H1 (cell line): ENCODE measurements at regions of chr19 and their contacts with region 1.

Region 1: GRCh38 chr19:3783660-3784584 is 2.3 kb downstream of the MATK start:
- DNase-seq: peak in 1 of 2 experiments; percentile 79
- H3K4me3 ChIP-seq: no peak overlapping the region
- H3K27ac ChIP-seq: no peak overlapping the region
- H3K4me1 ChIP-seq: peaks cover 0 to 9% (median 1%) of the 10 kb centered on the region in 4 experiments; a peak in 3 of 7 replicates
- H3K27me3 ChIP-seq: peaks cover 0 to 17% (median 7%) of the 10 kb centered on the region in 4 experiments; a peak in 6 of 7 replicates
- CTCF ChIP-seq: peak; percentile 68 to 87 (median 85)
- EP300 ChIP-seq: no peak
- POLR2A ChIP-seq: no peak
- RAD21 ChIP-seq: peak; percentile 68 to 81

Region 2: GRCh38 chr19:3700221-3701032 is 83.5 kb before region 1 on chr19 and contains the start of gene PIP5K1C:
- CTCF ChIA-PET with region 1: no interaction called
- POLR2A ChIA-PET with region 1: no interaction called
- DNase-seq: peak in 1 of 2 experiments; percentile 99
- H3K4me3 ChIP-seq: peak within 1 kb of the TSS; percentile 59 to 85 (median 72)
- H3K27ac ChIP-seq: no peak within 1 kb of the TSS
- H3K4me1 ChIP-seq: peaks cover 0 to 8% (median 2%) of the 10 kb centered on the region in 4 experiments; a peak in 3 of 7 replicates
- H3K27me3 ChIP-seq: no peaks in the 10 kb centered on the region; a peak in 2 of 7 replicates
- CTCF ChIP-seq: peak; percentile 75 to 84 (median 78)
- EP300 ChIP-seq: no peak
- POLR2A ChIP-seq: no peak
- RAD21 ChIP-seq: peak; percentile 64 to 72
- total RNA-seq, gene PIP5K1C: 31.3 and 32.9 TPM in 2 replicates

Region 3: DNA sequence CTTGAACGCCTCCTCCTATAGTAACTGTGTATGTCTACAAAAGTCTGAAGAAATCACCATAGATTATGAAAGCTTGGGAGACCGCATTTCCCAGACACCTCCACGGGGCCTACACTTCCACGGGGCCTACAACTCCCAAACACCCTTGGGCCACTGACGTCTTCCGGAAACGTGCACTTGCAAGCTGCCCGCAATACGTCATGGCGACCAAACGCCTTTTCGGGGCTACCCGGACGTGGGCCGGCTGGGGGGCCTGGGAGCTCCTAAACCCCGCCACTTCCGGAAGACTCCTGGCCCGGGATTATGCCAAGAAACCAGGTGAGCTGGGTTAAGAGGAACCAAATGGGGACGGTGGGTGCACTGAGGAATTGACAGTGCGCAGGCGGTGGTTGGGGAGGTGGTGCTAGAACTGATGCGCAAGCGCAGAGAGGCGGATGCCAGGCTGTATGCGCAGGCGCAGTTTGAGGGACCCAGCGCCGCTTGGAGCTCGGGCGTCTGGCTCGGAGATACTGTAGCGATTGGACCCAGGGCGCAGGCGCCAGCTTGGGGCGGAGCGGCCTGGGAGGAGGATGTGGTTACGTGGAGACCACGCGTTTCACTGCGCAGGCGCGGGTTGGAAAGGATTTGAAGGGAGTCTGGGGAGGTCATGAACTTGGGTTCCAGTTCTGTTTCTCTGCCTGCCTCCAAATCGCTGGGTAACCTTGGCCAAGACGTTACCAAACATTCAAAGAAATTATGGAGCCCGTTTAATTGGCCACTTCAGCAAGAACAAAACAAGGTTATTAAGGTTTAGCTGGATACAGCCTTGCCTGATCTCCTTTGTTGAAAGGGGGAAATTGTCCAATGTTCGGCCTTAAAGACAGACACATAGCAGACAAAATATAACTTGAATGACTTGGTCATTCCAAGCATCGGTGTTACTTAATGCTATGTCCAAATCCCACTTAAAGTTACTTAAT is 21.1 kb before region 1 on chr19 and contains the start of gene MRPL54:
- CTCF ChIA-PET with region 1: interaction called, 6 read pairs
- POLR2A ChIA-PET with region 1: interaction called, 19 read pairs
- DNase-seq: peak; percentile 96 to 99
- H3K4me3 ChIP-seq: peak within 1 kb of the TSS; percentile 88 to 95 (median 90)
- H3K27ac ChIP-seq: peak within 1 kb of the TSS; percentile 85
- H3K4me1 ChIP-seq: no peaks in the 10 kb centered on the region
- H3K27me3 ChIP-seq: no peaks in the 10 kb centered on the region
- CTCF ChIP-seq: no peak
- EP300 ChIP-seq: no peak
- POLR2A ChIP-seq: peak in 1 of 2 experiments; percentile 90; a peak in 2 of 3 replicates
- RAD21 ChIP-seq: no peak
- total RNA-seq, gene MRPL54: 72.8 and 80.3 TPM in 2 replicates

Region 4: DNA sequence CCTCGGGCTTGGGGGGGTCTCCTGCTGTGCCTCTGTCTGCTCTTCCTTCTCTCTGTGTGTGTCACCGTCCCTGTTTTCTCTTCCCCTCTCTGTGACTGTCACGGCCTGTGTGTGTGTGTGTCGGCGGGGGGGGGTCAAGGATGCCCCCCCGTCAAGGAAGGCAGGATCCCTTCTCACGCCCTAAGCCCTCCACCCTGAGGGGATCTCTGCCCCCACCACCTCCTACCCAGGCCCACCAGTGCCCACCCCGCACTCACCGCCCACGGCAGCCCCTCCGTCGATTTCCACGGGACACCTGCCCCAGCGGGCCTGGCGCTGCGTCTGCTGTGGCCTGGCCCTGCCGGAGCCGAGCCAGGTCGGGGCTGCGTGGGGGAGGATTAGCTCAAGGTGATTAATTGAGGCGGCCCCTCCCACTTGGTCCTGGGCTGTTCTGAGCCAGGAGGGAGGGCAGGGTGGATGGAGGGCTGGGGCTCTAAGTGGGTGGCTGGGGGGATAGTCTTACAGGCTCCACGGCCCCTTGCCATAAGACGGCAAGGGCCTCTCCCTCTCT is 11.9 kb before region 1 on chr19 and contains the start of gene RAX2:
- CTCF ChIA-PET with region 1: interaction called, 17 read pairs
- POLR2A ChIA-PET with region 1: interaction called, 5 read pairs
- DNase-seq: no peak
- H3K4me3 ChIP-seq: no peak within 1 kb of the TSS
- H3K27ac ChIP-seq: no peak within 1 kb of the TSS
- H3K4me1 ChIP-seq: peaks cover 0 to 7% (median 2%) of the 10 kb centered on the region in 4 experiments; a peak in 2 of 7 replicates
- H3K27me3 ChIP-seq: no peaks in the 10 kb centered on the region
- CTCF ChIP-seq: no peak
- EP300 ChIP-seq: no peak
- POLR2A ChIP-seq: no peak
- RAD21 ChIP-seq: no peak
- total RNA-seq, gene RAX2: not detected in 2 replicates

Region 5: GRCh38 chr19:3798137-3798536 is 14.2 kb after region 1 on chr19:
- CTCF ChIA-PET with region 1: interaction called, 13 read pairs
- POLR2A ChIA-PET with region 1: no interaction called
- DNase-seq: no peak
- H3K4me3 ChIP-seq: no peak overlapping the region
- H3K27ac ChIP-seq: no peak overlapping the region
- H3K4me1 ChIP-seq: peaks cover 0 to 3% (median 1%) of the 10 kb centered on the region in 4 experiments; a peak in 3 of 7 replicates
- H3K27me3 ChIP-seq: peaks cover 0 to 6% (median 4%) of the 10 kb centered on the region in 4 experiments; a peak in 5 of 7 replicates
- CTCF ChIP-seq: no peak
- EP300 ChIP-seq: no peak
- POLR2A ChIP-seq: no peak
- RAD21 ChIP-seq: no peak